Mammary epithelial cell (primary cell): ENCODE measurements at regions of chr11 and their contacts with region 1.

Region 1: DNA sequence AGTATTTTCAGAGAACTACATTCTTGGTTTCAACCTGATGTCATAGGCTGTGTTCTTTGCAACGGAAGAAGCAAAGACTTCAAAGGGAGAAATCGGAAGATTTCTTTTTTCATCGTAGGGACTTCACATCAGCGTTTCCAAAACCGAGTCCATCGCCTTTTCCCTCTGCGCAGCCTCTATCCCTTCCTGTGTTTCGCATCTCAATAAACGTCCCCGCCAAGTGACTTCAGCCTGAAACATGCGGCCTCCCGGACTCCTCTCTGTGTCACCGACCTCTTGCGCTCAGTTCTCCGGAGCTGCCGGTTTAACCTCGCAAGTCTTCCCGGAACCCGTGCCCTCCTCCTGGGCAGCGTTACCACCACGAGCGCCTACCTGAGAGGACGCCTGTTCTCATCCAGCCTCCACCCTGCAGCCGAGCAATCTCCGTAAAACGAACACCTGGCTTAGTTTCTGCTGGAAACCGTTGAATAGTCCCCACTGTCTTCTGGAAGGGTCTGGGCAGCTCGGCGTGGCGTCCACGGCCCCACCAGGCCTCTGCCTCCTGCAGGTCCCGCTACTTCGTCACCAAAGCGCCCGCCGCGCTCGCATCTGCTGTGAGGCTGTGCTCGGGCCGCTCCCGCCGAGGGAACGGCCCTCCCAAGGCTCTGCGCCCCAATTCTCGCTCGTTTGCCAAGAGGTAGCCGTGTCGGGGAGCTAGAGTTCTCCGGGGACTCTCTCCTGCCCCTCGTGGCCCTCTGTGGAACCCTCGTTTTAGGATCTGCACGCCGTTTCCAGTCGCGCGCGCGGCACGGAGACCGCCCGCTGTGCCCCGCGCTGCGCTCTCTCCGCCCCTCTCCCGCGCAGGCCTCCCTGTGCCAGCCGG is at the start of gene GLB1L3:
- DNase-seq: peak; percentile 63
- H3K4me3 ChIP-seq: peak within 1 kb of the TSS; percentile 26 to 66 (median 61)
- H3K27ac ChIP-seq: peak within 1 kb of the TSS; percentile 12
- H3K4me1 ChIP-seq: peaks cover 10% of the 10 kb centered on the region
- H3K27me3 ChIP-seq: peaks cover 3% of the 10 kb centered on the region
- CTCF ChIP-seq: peak; percentile 36 to 50
- total RNA-seq, gene GLB1L3: 0.50 to 6.3 TPM

Region 2: DNA sequence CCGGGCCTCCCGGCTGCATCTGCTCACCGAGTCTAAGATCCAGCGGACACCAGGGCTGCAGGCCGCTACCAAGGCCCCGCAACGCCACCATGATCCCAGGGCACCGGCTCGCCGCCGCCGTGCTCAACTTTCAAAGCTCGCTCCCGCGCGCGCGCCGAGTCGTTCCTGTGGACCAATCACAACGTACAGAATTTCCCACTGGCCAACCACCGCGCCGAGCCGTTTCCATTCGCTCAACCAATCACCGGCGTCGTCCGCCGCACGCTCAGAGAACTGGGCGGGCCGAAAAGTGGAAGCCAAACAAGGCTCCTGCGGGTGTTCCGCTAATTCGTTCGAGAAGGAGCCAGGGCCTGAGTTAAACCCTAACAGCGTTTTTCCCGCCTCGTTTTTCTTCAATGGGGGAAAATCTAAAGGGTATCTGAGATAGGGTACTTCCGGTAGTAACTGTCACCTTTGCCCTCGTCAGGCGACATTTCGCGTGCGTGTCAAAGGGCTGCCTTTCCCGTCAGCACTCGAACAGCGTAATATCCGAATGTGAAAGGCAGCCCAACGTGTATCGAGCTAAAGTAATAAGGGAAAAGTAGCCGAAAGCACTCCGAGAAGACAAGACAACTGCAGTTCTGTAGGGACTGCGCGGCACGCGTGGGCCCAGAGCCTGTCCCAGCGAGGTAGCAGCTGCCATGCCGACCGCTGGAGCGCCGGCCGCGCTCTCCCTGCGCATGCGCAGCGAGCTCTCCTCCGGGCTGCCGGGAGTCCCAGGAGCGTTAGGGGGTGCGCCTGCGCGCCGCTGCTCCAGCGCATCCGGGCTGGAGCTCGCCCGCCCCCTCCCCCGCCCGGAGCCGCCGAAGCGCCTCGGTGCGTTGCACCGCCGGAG is 51.7 kb before region 1 on chr11 and contains the starts of genes NCAPD3 and VPS26B:
- CTCF ChIA-PET with region 1: no interaction called
- dilution Hi-C with region 1: no loop called
- in situ Hi-C with region 1: no loop called
- intact Hi-C with region 1: loop called (anchors 2 kb)
- DNase-seq: peak; percentile 95
- H3K4me3 ChIP-seq: peak within 1 kb of the TSS; percentile 85 to 90 (median 89)
- H3K27ac ChIP-seq: peak within 1 kb of the TSS; percentile 55
- H3K4me1 ChIP-seq: peaks cover 20% of the 10 kb centered on the region
- H3K27me3 ChIP-seq: no peaks in the 10 kb centered on the region
- CTCF ChIP-seq: no peak
- total RNA-seq, gene NCAPD3: 16.2 to 36.9 TPM
- total RNA-seq, gene VPS26B: 46.0 to 46.6 TPM

Region 3: DNA sequence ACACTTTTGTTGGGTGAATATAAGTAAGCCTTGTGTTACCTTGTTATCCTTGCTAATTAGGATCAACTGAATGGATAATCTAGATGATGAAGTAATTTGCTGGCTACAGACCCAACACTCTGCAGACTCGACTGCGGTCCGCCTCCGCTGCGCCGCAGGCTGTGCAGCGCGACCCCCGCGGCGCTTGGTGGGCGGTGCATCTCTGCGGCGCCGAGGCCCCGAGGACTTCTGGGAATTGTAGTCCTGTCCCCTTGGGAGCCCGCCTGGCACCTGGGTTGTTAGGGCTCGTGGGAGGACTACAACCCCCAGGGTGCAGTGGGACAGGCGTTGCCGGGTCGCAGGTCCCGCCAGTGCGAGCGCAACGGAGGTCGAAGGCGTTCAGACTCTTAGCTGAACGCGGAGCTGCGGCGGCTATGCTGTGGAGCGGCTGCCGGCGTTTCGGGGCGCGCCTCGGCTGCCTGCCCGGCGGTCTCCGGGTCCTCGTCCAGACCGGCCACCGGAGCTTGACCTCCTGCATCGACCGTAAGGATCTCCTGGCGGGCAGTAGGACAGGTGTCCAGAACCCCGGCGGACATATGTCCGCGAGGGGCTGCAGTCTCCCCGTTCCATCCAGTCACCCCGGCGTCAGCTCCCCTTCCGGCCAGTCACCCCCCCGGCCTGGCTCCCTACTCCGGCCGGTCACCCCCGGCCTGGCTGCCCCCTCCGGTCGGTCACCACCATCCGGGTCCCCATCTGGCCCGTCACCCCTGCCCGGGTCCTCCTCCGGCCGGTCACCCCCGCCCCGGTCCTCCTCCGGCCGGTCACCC is 22.4 kb before region 1 on chr11 and contains the starts of genes ACAD8 and THYN1:
- CTCF ChIA-PET with region 1: interaction called, 4 read pairs
- dilution Hi-C with region 1: no loop called
- in situ Hi-C with region 1: no loop called
- intact Hi-C with region 1: loop called (anchors 2 kb)
- DNase-seq: peak; percentile 92
- H3K4me3 ChIP-seq: peak within 1 kb of the TSS; percentile 87 to 94 (median 92)
- H3K27ac ChIP-seq: peak within 1 kb of the TSS; percentile 44
- H3K4me1 ChIP-seq: peaks cover 6% of the 10 kb centered on the region
- H3K27me3 ChIP-seq: no peaks in the 10 kb centered on the region
- CTCF ChIP-seq: peak in 1 of 2 donors; percentile 27
- total RNA-seq, gene ACAD8: 20.8 to 21.0 TPM
- total RNA-seq, gene THYN1: 30.2 to 38.0 TPM

Region 4: DNA sequence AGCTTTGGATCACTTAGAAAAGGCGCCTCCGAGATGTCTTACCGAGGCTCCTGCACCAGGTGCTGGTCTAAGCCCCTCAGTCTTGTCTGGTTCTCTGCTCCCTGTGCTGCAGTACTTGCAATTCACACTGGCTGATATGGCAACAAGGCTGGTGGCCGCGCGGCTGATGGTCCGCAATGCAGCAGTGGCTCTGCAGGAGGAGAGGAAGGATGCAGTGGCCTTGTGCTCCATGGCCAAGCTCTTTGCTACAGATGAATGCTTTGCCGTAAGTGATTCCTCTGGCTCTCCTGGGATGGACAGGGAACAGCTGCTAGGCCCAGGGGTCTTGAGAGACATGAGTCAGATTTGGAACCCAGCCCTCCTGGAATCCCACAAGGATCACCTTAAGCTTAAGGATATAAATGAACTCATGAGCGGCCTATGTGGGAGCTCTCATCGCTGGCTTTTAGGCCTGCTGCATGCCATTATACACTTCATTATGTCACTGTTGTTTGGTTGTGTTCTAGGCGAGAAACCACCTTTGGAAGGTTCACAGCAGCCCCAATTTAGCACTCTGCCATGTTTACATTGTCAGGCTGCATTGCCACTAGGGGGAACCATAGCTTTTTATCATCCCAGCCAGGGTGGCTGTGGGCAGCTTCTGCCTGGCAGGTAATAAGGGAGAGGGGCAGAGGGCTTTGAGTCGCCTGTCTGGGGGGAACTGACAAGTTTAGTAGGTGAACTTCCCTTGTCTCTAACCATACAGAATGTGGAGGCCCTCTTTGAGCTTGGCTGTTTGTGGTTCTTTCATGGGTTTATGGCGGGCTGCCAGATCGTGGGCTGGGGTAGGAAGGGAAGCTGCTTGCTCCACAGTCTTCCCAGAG is 13.9 kb before region 1 on chr11:
- CTCF ChIA-PET with region 1: interaction called, 5 read pairs
- dilution Hi-C with region 1: no loop called
- in situ Hi-C with region 1: no loop called
- intact Hi-C with region 1: loop called (anchors 1 kb)
- DNase-seq: no peak
- H3K4me3 ChIP-seq: no peak overlapping the region
- H3K27ac ChIP-seq: no peak overlapping the region
- H3K4me1 ChIP-seq: peaks cover 7% of the 10 kb centered on the region
- H3K27me3 ChIP-seq: no peaks in the 10 kb centered on the region
- CTCF ChIP-seq: peak; percentile 65 to 72